ENCODE measurements at regions of chr10 and their contacts with region 1.

Region 1: GRCh38 chr10:4131407-4132228 is 346.6 kb upstream of the KLF6 start:
- DNase-seq: peak; percentile 83 to 96 (median 93)
- H3K4me3 ChIP-seq: peak overlapping the region; percentile 6 to 63 (median 25)
- H3K4me3 Mint-ChIP-seq: no peak overlapping the region
- H3K27ac ChIP-seq: peak overlapping the region; percentile 64 to 93
- H3K27ac Mint-ChIP-seq: no peak overlapping the region
- H3K4me1 ChIP-seq: peaks cover 65 to 71% of the 10 kb centered on the region in 2 donors
- H3K4me1 Mint-ChIP-seq: peaks cover 18% of the 10 kb centered on the region
- H3K27me3 ChIP-seq: no peaks in the 10 kb centered on the region
- H3K27me3 Mint-ChIP-seq: peaks cover 0 to 2% (median 0%) of the 10 kb centered on the region in 3 donors
- CTCF ChIP-seq: no peak

Region 2: DNA sequence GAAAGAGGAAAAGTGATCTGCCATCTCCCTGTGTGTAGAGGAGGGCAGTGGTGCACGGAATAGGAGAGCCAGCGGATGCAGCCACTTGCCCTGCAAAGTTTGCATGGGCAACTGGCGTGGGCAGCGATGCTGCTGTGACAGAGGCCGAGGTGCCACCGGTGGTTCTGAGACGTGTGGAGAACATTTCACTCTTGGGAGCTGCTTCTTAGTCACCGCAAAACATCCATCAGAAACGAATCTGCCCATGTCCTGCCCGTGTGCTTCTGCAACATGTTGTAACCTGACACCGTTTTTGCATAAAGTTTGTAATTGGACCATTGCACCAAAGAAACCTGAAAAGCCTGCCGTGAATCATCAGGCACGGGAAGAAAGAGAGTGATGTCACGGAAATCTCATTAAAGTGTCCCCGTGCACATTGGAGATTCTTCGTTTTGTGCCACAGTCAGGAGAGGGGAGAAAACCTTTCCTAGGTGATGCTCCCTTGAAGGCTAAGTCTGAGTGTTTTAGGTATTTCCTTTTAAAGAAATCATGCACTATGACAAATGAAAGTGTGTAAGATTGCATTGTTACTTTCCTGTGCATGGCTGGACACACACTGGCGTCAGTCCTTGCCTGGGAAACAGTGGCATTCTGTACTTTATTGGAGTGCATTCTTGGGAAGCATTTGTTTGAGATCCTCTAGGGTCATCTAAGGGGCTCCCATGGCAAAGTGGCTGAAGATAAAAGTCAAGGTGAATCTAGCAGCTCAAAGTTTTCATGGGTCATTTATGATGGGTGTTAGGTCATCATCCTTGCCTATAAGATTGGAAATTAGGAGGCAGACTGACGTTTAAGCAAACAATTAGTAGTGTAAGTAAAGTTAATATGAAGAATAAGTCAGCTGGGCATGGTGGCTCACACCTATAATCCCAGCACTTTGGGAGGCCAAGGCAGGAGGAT is 649.1 kb before region 1 on chr10:
- intact Hi-C with region 1: loop called in 1 of 2 experiments (anchors 10 kb)
- DNase-seq: peak; percentile 56 to 72 (median 70)
- H3K4me3 ChIP-seq: no peak overlapping the region
- H3K4me3 Mint-ChIP-seq: peak overlapping the region; percentile 37 to 53
- H3K27ac ChIP-seq: no peak overlapping the region
- H3K27ac Mint-ChIP-seq: peak overlapping the region in 3 of 7 donors; percentile 45 to 80 (median 62)
- H3K4me1 ChIP-seq: peaks cover 34 to 47% of the 10 kb centered on the region in 2 donors
- H3K4me1 Mint-ChIP-seq: peaks cover 45% of the 10 kb centered on the region
- H3K27me3 ChIP-seq: no peaks in the 10 kb centered on the region
- H3K27me3 Mint-ChIP-seq: peaks cover 0 to 7% (median 2%) of the 10 kb centered on the region in 3 donors
- CTCF ChIP-seq: no peak

Region 3: GRCh38 chr10:4067531-4067930 is 64.1 kb before region 1 on chr10:
- intact Hi-C with region 1: loop called in 1 of 2 experiments (anchors 10 kb)
- DNase-seq: peak; percentile 43 to 84 (median 53)
- H3K4me3 ChIP-seq: peak overlapping the region in 1 of 3 experiments; percentile 35
- H3K4me3 Mint-ChIP-seq: no peak overlapping the region
- H3K27ac ChIP-seq: peak overlapping the region; percentile 52 to 85
- H3K27ac Mint-ChIP-seq: no peak overlapping the region
- H3K4me1 ChIP-seq: peaks cover 25 to 26% of the 10 kb centered on the region in 2 donors
- H3K4me1 Mint-ChIP-seq: no peaks in the 10 kb centered on the region
- H3K27me3 ChIP-seq: no peaks in the 10 kb centered on the region
- H3K27me3 Mint-ChIP-seq: peaks cover 0 to 2% (median 0%) of the 10 kb centered on the region in 3 donors
- CTCF ChIP-seq: no peak

Region 4: DNA sequence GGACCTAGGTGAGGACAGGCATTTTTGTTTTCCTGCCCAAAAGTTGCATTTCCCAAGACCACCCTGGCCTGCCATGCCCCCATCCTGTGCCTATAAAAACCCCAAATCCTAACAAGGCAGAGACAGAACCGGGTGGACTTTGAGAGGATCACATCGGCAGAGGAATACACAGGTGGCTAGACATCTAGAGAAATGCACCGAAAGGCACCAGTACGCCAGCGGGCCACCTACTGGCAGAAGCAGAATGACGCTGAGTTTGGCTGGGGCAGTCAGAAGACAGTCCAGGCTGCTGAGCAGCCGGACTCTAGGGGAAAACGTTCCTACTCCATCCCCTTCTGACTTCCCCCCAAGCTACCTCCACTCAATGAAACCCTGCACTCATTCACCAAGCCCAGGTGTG is 1067.8 kb after region 1 on chr10:
- intact Hi-C with region 1: no loop called
- DNase-seq: no peak
- H3K4me3 ChIP-seq: no peak overlapping the region
- H3K4me3 Mint-ChIP-seq: no peak overlapping the region
- H3K27ac ChIP-seq: no peak overlapping the region
- H3K27ac Mint-ChIP-seq: peak overlapping the region in 1 of 7 donors; percentile 41
- H3K4me1 ChIP-seq: no peaks in the 10 kb centered on the region
- H3K4me1 Mint-ChIP-seq: no peaks in the 10 kb centered on the region
- H3K27me3 ChIP-seq: no peaks in the 10 kb centered on the region
- H3K27me3 Mint-ChIP-seq: no peaks in the 10 kb centered on the region
- CTCF ChIP-seq: no peak